ENCODE measurements at regions of chr17 and their contacts with region 1.

Region 1: DNA sequence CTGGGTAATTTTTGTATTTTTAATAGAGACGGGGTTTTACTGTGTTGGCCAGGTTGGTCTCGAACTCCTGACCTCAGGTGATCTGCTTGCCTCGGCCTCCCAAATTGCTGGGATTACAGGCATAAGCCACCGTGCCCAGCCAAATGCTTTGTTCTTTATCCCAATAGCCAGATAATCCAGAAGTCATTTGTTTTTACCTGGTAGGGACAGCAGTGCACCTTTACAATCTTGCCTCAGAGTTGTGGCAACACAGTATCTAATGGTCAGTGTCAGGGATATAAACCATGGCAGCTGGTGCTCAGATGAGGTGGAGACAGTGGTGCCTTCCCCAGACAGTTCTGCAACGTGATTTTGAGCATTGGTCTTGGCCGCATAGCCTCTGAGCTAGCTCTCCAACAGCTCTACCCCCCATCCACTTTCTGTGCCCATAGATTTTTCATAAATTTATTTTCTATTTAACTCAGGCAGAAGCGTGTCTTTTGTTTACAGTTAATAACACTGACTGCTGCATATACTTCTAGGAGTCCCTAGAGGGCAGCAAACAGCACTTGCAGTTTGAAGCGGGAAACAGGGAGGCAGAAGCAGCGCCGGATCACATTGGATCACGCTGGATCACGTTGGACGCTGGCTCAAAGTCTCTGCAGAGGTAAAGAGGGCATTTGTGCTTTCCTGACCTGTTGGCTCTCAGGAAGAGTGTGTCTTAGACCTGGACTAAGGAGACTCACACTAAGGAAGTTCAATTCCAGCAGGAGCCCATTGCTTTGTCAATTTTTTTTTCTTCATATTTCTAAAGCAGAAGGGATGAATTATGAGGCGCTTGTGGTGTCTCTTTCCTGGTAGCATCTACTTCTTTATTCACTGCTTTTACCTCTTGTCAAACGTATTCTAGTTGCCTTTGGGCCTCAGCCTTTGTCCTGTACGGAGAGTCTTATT is 5.1 kb upstream of the GGT6 start:
- DNase-seq: peak in 4 of 6 donors; percentile 60 to 69 (median 64)
- ATAC-seq: peak; percentile 85 to 94 (median 91)
- H3K4me3 ChIP-seq: no peak overlapping the region
- H3K27ac ChIP-seq: no peak overlapping the region
- H3K4me1 ChIP-seq: peaks cover 6 to 8% (median 6%) of the 10 kb centered on the region in 3 donors
- H3K27me3 ChIP-seq: no peaks in the 10 kb centered on the region
- CTCF ChIP-seq: peak; percentile 57 to 77 (median 71)

Region 2: GRCh38 chr17:4594931-4595684 is 29.6 kb after region 1 on chr17:
- intact Hi-C with region 1: no loop called
- DNase-seq: peak in 1 of 6 donors; percentile 56
- ATAC-seq: peak; percentile 17 to 64 (median 48)
- H3K4me3 ChIP-seq: no peak overlapping the region
- H3K27ac ChIP-seq: no peak overlapping the region
- H3K4me1 ChIP-seq: no peaks in the 10 kb centered on the region
- H3K27me3 ChIP-seq: no peaks in the 10 kb centered on the region
- CTCF ChIP-seq: peak in 1 of 4 donors; percentile 21

Region 3: GRCh38 chr17:4625181-4625617 is 59.7 kb after region 1 on chr17:
- intact Hi-C with region 1: loop called in 2 of 3 experiments (anchors 2 to 5 kb)
- DNase-seq: no peak
- ATAC-seq: no peak
- H3K4me3 ChIP-seq: no peak overlapping the region
- H3K27ac ChIP-seq: no peak overlapping the region
- H3K4me1 ChIP-seq: no peaks in the 10 kb centered on the region
- H3K27me3 ChIP-seq: no peaks in the 10 kb centered on the region
- CTCF ChIP-seq: no peak